GM12878 (cell line): ENCODE measurements at regions of chr21 and their contacts with region 1.

Region 1: DNA sequence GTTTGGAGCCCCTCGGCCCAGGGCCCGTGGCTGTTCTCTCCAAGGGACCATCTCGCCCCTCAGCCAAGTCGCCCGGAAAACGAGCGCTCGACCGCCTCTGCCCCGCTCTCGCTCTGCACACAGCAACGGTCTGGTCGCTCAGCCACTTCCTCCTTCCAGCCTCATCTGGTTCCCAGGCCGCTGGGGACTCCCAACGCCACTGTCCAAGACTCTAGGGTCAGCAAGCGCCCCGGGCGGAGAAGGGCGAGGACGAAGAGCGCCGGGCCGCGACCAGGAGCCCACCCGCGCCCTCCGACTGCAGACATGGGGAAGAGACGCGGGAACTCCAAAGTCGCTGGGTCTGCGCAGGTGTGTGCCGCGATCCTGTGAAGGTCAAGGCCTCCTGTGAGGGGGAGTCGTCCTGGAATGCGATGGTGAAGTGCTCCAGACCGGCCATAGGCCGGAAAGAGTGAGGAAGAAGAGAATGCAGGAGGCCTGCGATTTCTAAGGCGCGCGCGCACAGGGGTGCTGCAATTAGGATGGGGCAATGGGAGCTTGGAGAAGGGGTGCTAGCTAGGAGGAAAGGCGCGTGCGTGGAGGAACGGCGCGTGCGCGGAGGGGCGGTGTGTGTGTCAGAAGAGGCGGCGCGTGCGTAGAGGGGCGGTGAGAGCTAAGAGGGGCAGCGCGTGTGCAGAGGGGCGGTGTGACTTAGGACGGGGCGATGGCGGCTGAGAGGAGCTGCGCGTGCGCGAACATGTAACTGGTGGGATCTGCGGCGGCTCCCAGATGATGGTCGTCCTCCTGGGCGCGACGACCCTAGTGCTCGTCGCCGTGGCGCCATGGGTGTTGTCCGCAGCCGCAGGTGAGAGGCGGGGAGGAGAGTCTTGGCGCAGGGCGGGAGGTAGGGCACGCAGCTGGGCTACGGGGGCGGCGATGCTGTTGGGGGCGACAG is at the start of gene IFNAR1:
- DNase-seq: peak; percentile 91
- ATAC-seq: peak; percentile 91
- H3K4me3 ChIP-seq: peak within 1 kb of the TSS; percentile 85
- H3K27ac ChIP-seq: peak within 1 kb of the TSS; percentile 97
- H3K4me1 ChIP-seq: peaks cover 4% of the 10 kb centered on the region; the same call in 1 of the 2 replicates
- H3K27me3 ChIP-seq: no peaks in the 10 kb centered on the region
- CTCF ChIP-seq: no peak
- EP300 ChIP-seq: no peak
- POLR2A ChIP-seq: peak; percentile 93
- RAD21 ChIP-seq: no peak
- polyA plus RNA-seq, gene IFNAR1: 25.6 to 30.9 TPM

Region 2: DNA sequence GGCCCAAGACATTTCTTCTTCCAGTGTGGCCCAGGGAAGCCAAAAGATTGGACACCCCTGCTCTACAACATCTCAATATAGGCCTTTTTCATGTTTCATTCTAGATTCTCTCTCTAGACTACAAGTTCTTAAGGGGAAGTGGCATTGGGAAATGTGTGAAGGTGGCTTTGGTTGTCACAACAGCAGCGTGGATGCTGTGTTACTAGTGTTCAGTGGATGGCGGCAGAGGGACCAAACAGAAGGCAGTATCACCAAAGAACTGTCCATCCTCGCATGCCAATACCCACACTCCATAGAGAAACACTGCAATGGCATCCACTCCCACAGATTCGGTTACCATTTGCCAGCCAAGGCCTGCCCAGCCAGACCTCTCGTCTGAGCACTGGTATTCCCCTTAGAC is 119.1 kb before region 1 on chr21:
- CTCF ChIA-PET with region 1: no interaction called
- POLR2A ChIA-PET with region 1: interaction called, 4 read pairs
- RAD21 ChIA-PET with region 1: interaction called, 23 read pairs
- SMC1A ChIA-PET with region 1: interaction called, 10 read pairs
- in situ Hi-C with region 1: no loop called
- intact Hi-C with region 1: no loop called
- DNase-seq: no peak
- ATAC-seq: peak; percentile 29
- H3K4me3 ChIP-seq: no peak overlapping the region
- H3K27ac ChIP-seq: peak overlapping the region; percentile 51
- H3K4me1 ChIP-seq: peaks cover 19% of the 10 kb centered on the region
- H3K27me3 ChIP-seq: no peaks in the 10 kb centered on the region
- CTCF ChIP-seq: peak in 1 of 3 experiments; percentile 8; a peak in 1 of 6 replicates
- EP300 ChIP-seq: no peak
- POLR2A ChIP-seq: no peak
- RAD21 ChIP-seq: no peak

Region 3: DNA sequence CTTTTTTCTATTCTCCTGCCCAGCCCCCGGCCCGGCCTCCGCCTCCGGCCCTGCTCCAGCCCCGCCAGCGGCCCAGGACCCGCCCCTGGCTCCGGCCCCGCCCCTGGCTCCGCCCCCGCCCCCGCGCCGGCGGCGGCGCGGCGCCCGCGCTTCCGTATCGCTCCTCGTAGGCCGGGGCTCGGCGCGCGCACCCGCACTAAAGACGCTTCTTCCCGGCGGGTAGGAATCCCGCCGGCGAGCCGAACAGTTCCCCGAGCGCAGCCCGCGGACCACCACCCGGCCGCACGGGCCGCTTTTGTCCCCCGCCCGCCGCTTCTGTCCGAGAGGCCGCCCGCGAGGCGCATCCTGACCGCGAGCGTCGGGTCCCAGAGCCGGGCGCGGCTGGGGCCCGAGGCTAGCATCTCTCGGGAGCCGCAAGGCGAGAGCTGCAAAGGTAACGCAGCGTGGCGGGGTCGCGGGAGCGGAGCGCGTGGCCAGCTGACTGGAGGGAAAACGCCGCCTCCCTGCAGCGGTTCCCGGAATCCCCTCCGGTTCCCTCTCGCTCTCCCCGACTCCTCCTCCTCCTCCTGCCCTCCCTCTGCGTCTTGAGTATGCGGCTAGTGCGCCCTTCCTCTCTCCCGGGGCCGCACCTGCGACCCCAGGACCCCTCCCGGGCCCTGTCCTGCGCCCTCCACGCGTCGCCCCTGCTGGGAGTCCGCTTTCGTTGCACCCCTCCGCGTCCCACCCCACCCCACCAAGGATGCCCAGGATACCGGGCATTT is 94.6 kb before region 1 on chr21 and contains the start of gene IFNAR2:
- CTCF ChIA-PET with region 1: interaction called, 4 read pairs
- POLR2A ChIA-PET with region 1: interaction called, 6 read pairs
- RAD21 ChIA-PET with region 1: interaction called, 10 read pairs
- SMC1A ChIA-PET with region 1: interaction called, 4 read pairs
- in situ Hi-C with region 1: no loop called
- intact Hi-C with region 1: no loop called
- DNase-seq: no peak
- ATAC-seq: peak; percentile 75
- H3K4me3 ChIP-seq: peak within 1 kb of the TSS; percentile 100
- H3K27ac ChIP-seq: peak within 1 kb of the TSS; percentile 96
- H3K4me1 ChIP-seq: peaks cover 13% of the 10 kb centered on the region
- H3K27me3 ChIP-seq: no peaks in the 10 kb centered on the region
- CTCF ChIP-seq: no peak
- EP300 ChIP-seq: no peak
- POLR2A ChIP-seq: peak; percentile 64; the same call in 1 of the 2 replicates
- RAD21 ChIP-seq: no peak
- polyA plus RNA-seq, gene IFNAR2: 8.5 to 23.3 TPM

Region 4: DNA sequence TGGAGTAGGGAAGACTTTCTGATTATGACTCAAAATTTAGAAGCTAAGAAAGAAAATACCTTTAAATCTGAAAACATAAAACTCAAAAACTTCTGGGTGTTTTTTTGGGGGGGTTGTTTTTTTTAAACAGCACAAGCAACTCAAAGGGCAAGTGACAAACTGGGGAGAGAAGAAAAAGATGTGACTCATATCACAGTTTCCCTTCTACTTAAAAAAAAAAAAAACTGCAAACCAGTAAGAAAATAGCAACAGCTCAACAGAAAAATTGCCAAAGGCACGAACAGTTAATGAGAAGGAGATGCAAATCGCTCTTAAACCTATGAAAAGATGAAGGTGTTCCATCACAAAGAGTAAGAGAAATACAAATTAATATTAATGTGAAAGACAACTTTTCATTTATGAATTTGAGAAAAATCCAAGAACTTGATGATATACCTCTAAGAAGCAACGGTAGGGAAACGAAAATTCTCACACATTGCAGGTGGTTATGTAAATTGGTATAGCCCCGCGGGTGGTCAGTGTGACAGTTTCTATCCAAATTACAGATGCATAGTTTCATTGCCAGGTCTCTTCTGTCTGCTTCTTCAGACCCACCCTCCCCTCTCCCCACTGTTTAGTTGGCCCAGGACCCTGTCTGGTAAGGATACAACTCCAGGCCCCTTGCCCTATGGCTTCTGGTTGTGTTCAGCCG is 85.8 kb before region 1 on chr21:
- CTCF ChIA-PET with region 1: no interaction called
- POLR2A ChIA-PET with region 1: interaction called, 16 read pairs
- RAD21 ChIA-PET with region 1: interaction called, 16 read pairs
- SMC1A ChIA-PET with region 1: interaction called, 6 read pairs
- in situ Hi-C with region 1: no loop called
- intact Hi-C with region 1: no loop called
- DNase-seq: peak; percentile 76
- ATAC-seq: peak; percentile 79
- H3K4me3 ChIP-seq: peak overlapping the region; percentile 66
- H3K27ac ChIP-seq: peak overlapping the region; percentile 86
- H3K4me1 ChIP-seq: peaks cover 56% of the 10 kb centered on the region
- H3K27me3 ChIP-seq: no peaks in the 10 kb centered on the region
- CTCF ChIP-seq: no peak
- EP300 ChIP-seq: peak; percentile 79 to 96
- POLR2A ChIP-seq: 0 out of 2 replicates have a peak, but pooled peaks have one; percentile 40
- RAD21 ChIP-seq: 0 out of 2 replicates have a peak, but pooled peaks have one; percentile 10

Region 5: DNA sequence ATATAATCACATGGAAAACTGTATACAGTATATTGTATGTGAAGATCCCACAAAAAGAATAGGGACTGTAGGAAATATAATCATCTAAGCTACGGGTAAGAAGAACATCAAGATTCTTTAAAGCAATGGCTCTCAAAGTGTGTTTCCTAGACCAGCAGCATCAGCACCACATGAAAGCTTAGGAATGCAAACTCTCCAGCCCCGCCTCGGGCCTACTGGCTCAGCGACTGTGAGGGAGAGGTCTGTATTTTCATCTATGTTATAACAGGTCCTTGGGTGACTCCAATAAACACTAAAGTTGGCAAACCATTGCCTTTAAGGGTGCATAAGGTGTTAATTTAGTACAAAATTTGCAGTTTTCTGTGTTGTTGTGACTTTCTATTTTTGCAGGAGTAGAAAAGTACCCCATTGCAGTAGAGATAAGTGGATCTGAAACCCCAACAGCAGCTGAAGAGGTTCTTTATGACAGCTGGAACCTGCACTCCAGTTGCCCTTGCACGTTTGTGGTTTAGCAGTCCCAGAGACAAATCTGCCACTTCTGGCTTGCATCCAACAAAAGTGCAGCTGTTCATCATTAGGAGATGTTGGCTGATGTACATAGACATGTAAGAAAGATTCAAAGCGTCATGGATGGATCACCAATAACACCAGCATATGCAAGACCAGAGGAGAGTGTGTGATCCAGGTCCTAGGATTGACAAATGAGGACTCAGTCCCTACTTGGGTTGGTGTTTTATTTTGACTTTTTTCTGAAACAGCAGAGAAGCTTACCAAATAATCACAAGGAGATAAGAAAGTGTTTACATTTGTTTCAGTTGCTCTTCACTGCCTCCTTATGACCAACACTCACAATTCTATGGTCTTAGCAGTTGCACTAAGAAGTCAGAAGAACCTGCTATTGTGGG is 15.7 kb before region 1 on chr21:
- CTCF ChIA-PET with region 1: interaction called, 7 read pairs
- POLR2A ChIA-PET with region 1: interaction called, 3 read pairs
- RAD21 ChIA-PET with region 1: interaction called, 10 read pairs
- SMC1A ChIA-PET with region 1: interaction called, 6 read pairs
- in situ Hi-C with region 1: no loop called
- intact Hi-C with region 1: no loop called
- DNase-seq: peak; percentile 98
- ATAC-seq: peak; percentile 96
- H3K4me3 ChIP-seq: peak overlapping the region; percentile 9; the same call in 1 of the 2 replicates
- H3K27ac ChIP-seq: peak overlapping the region; percentile 57
- H3K4me1 ChIP-seq: peaks cover 21% of the 10 kb centered on the region
- H3K27me3 ChIP-seq: no peaks in the 10 kb centered on the region
- CTCF ChIP-seq: peak in 2 of 3 experiments; percentile 5 to 33; a peak in 2 of 6 replicates
- EP300 ChIP-seq: peak; percentile 91; a peak in 3 of 4 replicates
- POLR2A ChIP-seq: no peak
- RAD21 ChIP-seq: 0 out of 2 replicates have a peak, but pooled peaks have one; percentile 17

Region 6: GRCh38 chr21:33403779-33404585 is 79.4 kb after region 1 on chr21:
- CTCF ChIA-PET with region 1: no interaction called
- POLR2A ChIA-PET with region 1: interaction called, 10 read pairs
- RAD21 ChIA-PET with region 1: interaction called, 5 read pairs
- SMC1A ChIA-PET with region 1: interaction called, 3 read pairs
- in situ Hi-C with region 1: no loop called
- intact Hi-C with region 1: no loop called
- DNase-seq: no peak
- ATAC-seq: peak; percentile 60
- H3K4me3 ChIP-seq: peak overlapping the region; percentile 84
- H3K27ac ChIP-seq: peak overlapping the region; percentile 97
- H3K4me1 ChIP-seq: peaks cover 15% of the 10 kb centered on the region
- H3K27me3 ChIP-seq: no peaks in the 10 kb centered on the region
- CTCF ChIP-seq: no peak
- EP300 ChIP-seq: no peak
- POLR2A ChIP-seq: peak; percentile 77
- RAD21 ChIP-seq: no peak

Region 7: DNA sequence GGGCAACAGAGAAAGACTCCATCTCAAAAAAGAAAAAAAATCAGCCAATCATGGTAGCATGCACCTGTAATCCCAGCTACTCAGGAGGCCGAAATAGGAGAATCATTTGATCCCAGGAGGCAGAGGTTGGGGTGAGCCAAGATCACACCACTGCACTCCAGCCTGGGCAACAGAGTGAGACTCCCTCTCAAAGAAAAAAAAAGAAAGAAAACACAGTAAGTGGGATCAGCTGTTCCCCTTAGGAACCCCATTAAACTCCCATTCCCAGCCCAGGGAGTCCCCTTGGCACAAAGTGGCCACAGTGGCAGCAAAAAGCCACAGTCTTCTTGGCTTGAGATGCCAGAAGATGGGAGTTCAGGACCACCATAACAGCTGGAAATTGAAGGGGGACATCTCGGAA is 146.1 kb after region 1 on chr21:
- CTCF ChIA-PET with region 1: no interaction called
- POLR2A ChIA-PET with region 1: no interaction called
- RAD21 ChIA-PET with region 1: no interaction called
- SMC1A ChIA-PET with region 1: no interaction called
- in situ Hi-C with region 1: no loop called
- intact Hi-C with region 1: no loop called
- DNase-seq: no peak
- ATAC-seq: no peak
- H3K4me3 ChIP-seq: no peak overlapping the region
- H3K27ac ChIP-seq: no peak overlapping the region
- H3K4me1 ChIP-seq: no peaks in the 10 kb centered on the region
- H3K27me3 ChIP-seq: no peaks in the 10 kb centered on the region
- CTCF ChIP-seq: no peak
- EP300 ChIP-seq: no peak
- POLR2A ChIP-seq: no peak
- RAD21 ChIP-seq: no peak